Colonic mucosa (tissue), 4 donors: ENCODE measurements at regions of chr22 and their contacts with region 1.

Region 1: DNA sequence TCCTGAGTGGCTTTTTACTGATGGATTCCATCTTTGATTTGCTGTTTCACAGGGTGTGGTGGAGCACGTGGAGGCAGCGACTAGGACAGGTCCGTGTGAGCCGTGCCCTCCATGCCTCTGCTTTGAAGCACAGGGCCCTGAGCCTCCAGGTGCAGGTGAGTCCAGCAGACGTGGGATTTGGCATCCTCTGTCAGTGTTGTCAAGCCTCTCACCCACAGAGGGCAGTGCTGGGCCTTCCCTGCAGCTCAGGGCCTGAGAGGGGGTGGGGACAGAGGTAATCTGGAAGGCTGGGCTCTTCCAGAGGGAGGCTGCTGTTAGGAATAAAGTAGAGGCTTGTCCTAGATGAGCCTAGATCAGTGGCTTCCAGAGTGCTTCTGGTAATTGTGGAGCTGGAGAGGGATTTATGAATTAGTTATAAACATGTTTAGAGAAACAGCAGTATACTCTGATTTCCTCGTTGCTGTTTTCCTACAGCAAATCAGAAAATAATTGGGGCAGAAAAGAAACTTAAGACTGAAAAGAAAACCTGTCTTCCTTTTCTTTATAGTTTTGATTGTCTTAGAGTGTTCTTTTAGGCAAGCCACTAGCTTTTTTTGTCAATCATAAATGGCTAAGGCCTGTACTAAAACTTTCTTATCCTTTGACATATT is 65.0 kb downstream of the SFI1 start:
- DNase-seq: peak; percentile 83
- H3K4me3 ChIP-seq: no peak overlapping the region
- H3K27ac ChIP-seq: no peak overlapping the region
- H3K4me1 ChIP-seq: no peaks in the 10 kb centered on the region
- H3K27me3 ChIP-seq: no peaks in the 10 kb centered on the region
- CTCF ChIP-seq: peak; percentile 70

Region 2: GRCh38 chr22:31630331-31631329 is 69.3 kb after region 1 on chr22:
- intact Hi-C with region 1: loop called (anchors 2 kb)
- DNase-seq: peak; percentile 73
- H3K4me3 ChIP-seq: peak overlapping the region; percentile 62
- H3K27ac ChIP-seq: peak overlapping the region; percentile 70
- H3K4me1 ChIP-seq: peaks cover 14% of the 10 kb centered on the region
- H3K27me3 ChIP-seq: no peaks in the 10 kb centered on the region
- CTCF ChIP-seq: no peak